Psoas muscle (tissue), 8 donors: ENCODE measurements at regions of chr16 and their contacts with region 1.

Region 1: GRCh38 chr16:4200000-4200780 is 41.7 kb downstream of the SRL start:
- DNase-seq: peak; percentile 70 to 76
- ATAC-seq: peak; percentile 45 to 66 (median 60)
- H3K4me3 ChIP-seq: no peak overlapping the region
- H3K27ac ChIP-seq: peak overlapping the region; percentile 10
- H3K4me1 ChIP-seq: peaks cover 17% of the 10 kb centered on the region
- H3K27me3 ChIP-seq: no peaks in the 10 kb centered on the region
- CTCF ChIP-seq: peak; percentile 57

Region 2: DNA sequence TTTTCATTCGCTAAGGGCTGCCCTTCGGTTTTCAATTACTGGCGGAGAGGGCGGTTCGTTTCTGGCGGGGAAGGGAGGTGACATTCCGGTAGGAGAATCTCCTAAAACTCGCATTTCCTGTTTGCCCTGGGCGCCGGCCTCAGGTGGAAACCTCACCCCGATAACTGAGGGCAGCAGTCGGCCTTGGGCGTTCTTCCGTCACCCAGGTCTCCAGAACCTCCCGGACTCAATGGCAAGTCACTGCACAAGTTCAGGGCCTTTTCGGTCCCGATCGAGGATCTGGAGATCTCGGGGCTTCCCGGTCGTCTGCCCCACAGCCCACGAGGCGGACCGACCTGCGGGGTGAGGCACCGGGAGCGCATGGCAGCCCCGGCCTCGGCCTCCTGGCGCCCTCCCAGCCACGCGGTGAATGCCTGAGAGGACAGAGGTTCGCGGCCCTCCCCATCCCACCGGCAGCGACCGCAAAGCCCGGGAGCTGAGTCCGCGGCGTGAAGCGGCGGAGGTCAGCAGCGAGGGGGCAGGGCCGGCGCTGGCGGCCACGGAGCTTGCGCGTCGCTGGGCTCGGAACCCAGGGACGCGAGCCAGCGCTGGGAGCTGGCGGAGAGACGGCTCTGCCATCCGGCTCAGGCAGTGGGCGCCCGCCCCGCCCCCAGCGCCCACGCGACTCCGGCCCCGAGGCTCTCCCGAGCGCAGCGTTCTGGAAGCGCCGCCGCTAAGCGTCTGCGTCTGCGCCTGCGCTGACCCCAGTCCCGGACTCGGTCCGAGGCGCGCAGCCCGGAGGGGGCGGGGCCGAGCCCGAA is 16.8 kb before region 1 on chr16:
- intact Hi-C with region 1: loop called in 1 of 2 experiments (anchors 2 kb)
- DNase-seq: peak; percentile 94 to 97
- ATAC-seq: peak; percentile 89 to 95 (median 90)
- H3K4me3 ChIP-seq: peak overlapping the region; percentile 81
- H3K27ac ChIP-seq: peak overlapping the region; percentile 90
- H3K4me1 ChIP-seq: no peaks in the 10 kb centered on the region
- H3K27me3 ChIP-seq: no peaks in the 10 kb centered on the region
- CTCF ChIP-seq: no peak

Region 3: GRCh38 chr16:4253394-4254150 is 53.4 kb after region 1 on chr16:
- intact Hi-C with region 1: loop called in 1 of 2 experiments (anchors 1 kb)
- DNase-seq: peak; percentile 100
- ATAC-seq: peak; percentile 93 to 96 (median 94)
- H3K4me3 ChIP-seq: peak overlapping the region; percentile 71
- H3K27ac ChIP-seq: peak overlapping the region; percentile 91
- H3K4me1 ChIP-seq: peaks cover 7% of the 10 kb centered on the region
- H3K27me3 ChIP-seq: no peaks in the 10 kb centered on the region
- CTCF ChIP-seq: no peak

Region 4: DNA sequence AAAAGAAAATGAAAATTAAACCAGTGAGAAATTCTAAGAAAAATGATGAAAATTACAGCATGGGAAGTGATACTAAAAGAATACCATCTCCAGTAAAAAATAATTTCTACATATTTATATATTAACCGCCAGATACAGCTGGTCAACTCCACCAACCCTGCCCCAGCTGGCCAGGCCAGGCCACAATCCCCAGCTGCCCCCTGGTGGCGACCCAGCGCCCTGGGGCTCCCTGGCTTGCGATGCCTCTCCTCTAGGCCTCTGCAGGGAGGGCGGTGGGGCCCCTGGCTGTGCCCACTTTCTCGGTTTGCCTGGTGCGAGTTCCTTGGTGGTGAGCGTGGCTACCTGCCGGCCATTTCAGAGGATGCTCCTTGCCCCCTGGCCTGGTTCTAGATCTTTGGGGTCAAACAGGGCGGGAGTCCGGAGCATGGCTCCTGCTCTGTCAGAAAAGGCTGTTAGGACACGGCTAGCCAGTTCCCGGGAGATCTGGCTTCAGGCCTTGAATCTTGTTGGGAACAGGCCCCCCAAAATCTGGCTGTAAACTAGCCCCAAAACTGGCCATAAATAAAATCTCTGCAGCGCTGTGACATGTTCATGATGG is 130.2 kb after region 1 on chr16:
- intact Hi-C with region 1: loop called (anchors 5 to 10 kb)
- DNase-seq: peak; percentile 87 to 93
- ATAC-seq: peak; percentile 80 to 87 (median 84)
- H3K4me3 ChIP-seq: no peak overlapping the region
- H3K27ac ChIP-seq: no peak overlapping the region
- H3K4me1 ChIP-seq: peaks cover 21% of the 10 kb centered on the region
- H3K27me3 ChIP-seq: no peaks in the 10 kb centered on the region
- CTCF ChIP-seq: peak; percentile 99

Region 5: DNA sequence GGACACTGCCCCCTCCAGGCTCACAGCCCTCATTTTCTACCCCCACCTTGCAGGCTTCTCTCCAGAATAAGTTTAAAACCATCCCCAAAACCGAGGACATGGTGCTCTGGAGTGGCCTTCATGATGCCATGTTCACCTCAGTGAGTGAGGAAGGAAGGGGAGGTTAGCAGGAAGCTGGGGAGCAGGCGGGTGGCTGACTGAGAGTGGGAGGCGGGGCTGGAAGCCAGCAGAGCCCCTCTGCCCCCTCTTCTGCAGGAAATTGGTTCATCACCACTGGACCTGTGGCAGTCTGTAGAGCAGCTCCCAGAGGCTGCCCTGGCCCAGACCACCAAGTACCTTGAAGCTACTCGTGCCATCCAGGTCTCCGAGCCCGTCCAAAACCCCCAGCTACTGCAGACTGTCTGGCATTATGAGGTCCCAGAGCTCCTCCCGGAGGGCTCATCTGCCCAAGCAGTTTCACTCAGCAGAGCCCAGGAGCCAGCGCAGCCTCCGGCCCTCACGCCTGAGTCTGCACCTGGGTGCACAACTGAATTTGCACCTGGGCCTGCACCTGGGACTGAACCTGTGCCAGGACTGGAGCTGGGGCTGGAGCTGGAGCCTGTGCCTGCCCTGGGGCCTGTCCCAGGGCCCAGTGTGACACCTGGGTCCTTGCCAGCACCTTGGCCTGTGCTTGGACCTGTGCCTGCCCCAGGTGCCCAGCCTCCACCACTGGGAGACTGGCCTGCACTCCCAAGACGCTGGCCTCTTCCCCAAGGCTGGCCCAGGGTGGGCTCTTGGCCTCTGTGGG is 374.9 kb after region 1 on chr16:
- intact Hi-C with region 1: no loop called
- DNase-seq: no peak
- ATAC-seq: no peak
- H3K4me3 ChIP-seq: no peak overlapping the region
- H3K27ac ChIP-seq: no peak overlapping the region
- H3K4me1 ChIP-seq: no peaks in the 10 kb centered on the region
- H3K27me3 ChIP-seq: peaks cover 0 to 4% (median 0%) of the 10 kb centered on the region in 3 donors
- CTCF ChIP-seq: no peak